ENCODE measurements at regions of chr4 and their contacts with region 1.

Region 1: GRCh38 chr4:127896528-127896927 is 15.8 kb downstream of the PLK4 start:
- DNase-seq: no peak
- ATAC-seq: no peak

Region 2: DNA sequence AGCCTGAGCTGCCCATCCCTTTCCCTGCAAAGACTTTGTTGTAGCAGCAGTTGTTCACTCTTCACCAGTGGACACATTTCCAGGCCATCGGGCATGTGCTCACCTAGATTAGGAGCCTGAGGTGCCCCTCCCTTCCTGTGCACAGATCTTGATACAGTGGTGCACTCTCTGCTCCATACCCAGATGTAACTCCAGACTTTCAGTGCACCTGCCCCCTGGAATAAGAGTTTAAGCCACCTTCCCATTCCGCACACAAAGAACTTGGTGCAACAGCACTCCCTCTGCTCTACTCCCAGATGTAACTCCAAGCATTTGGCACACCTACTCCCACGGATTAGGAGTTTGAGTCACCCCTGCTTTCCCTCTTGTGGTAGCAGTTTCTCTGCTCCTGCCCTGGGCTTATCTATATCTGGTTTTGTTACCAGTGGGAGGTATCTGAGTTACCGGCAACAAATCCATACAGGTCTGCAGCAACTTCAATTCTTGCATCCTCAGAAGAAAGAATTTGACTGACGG is 51.9 kb before region 1 on chr4:
- intact Hi-C with region 1: no loop called
- DNase-seq: no peak
- ATAC-seq: no peak

Region 3: DNA sequence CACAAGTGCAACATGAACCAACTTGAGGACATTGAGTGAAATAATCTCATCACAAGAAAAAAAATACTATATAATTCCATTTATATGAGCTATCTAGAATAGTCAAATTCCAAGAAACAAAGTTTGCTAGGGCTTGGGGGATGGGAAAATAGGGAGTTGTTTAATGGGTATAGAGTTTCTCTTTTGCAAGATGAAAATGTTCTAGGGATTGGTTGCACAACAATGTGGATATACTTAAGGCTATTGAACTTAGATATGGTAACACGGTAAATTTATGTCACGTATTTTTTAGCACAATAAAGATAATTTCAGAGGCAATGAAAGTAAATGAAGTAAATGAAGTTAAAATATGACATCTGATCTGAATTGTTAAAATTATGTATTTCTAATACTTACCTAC is 60.6 kb after region 1 on chr4:
- intact Hi-C with region 1: loop called (anchors 2 kb)
- DNase-seq: no peak
- ATAC-seq: no peak